Aorta (tissue), 5 donors: ENCODE measurements at regions of chr2 and their contacts with region 1.

Region 1: DNA sequence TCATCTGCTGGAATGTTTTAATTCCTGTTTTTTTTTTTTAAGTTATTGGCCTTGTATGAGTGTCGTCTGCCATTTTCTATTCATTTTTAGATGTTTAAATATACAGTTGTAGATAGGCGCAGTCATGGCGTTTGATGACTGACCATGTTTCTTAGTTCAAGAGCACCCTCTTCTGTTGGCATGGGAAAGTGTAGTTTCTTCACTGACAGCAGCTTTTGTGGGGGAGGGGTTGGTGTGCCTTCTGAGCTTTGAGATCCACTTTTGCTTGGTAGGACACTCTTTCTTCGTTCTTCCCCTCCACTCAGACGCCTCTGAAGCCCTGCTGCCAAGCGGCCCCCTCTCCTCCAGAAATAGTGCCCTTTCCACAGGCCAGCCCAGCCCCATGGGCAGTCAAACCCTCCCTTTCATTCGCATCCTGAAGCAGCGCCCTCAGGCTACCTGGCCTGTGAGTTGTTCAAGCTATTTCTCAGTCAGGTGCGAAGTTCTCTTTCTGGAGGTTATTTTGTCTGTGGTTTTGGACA is 492.0 kb downstream of the TNS1 start:
- DNase-seq: peak in 1 of 2 donors; percentile 57
- ATAC-seq: peak; percentile 89
- H3K4me3 ChIP-seq: no peak overlapping the region
- H3K27ac ChIP-seq: no peak overlapping the region
- H3K4me1 ChIP-seq: no peaks in the 10 kb centered on the region
- H3K27me3 ChIP-seq: no peaks in the 10 kb centered on the region

Region 2: DNA sequence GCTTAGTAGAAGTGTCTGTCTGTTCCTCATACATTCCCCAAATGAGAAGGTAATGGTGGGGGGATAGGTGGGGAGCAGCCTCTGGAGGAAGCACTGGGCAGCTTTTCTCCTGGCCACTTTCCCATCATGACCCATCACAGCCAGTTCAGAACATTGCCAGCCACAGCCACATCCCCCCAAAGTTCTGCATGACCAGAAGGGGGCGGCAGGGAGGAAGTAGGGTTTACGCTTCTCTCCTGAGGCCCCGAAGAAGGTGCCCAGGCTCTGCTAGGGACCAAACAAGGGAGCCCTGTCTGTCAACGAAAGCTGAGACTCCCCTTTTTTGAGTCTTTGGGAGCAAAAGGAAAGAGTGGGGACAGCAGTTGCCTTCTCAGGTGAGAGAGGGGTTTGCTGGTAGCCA is 823.2 kb before region 1 on chr2:
- intact Hi-C with region 1: loop called (anchors 5 kb)
- DNase-seq: peak in 1 of 2 donors; percentile 76
- ATAC-seq: no peak
- H3K4me3 ChIP-seq: no peak overlapping the region
- H3K27ac ChIP-seq: peak overlapping the region in 1 of 2 donors; percentile 29
- H3K4me1 ChIP-seq: peaks cover 0 to 4% of the 10 kb centered on the region in 2 donors
- H3K27me3 ChIP-seq: no peaks in the 10 kb centered on the region

Region 3: DNA sequence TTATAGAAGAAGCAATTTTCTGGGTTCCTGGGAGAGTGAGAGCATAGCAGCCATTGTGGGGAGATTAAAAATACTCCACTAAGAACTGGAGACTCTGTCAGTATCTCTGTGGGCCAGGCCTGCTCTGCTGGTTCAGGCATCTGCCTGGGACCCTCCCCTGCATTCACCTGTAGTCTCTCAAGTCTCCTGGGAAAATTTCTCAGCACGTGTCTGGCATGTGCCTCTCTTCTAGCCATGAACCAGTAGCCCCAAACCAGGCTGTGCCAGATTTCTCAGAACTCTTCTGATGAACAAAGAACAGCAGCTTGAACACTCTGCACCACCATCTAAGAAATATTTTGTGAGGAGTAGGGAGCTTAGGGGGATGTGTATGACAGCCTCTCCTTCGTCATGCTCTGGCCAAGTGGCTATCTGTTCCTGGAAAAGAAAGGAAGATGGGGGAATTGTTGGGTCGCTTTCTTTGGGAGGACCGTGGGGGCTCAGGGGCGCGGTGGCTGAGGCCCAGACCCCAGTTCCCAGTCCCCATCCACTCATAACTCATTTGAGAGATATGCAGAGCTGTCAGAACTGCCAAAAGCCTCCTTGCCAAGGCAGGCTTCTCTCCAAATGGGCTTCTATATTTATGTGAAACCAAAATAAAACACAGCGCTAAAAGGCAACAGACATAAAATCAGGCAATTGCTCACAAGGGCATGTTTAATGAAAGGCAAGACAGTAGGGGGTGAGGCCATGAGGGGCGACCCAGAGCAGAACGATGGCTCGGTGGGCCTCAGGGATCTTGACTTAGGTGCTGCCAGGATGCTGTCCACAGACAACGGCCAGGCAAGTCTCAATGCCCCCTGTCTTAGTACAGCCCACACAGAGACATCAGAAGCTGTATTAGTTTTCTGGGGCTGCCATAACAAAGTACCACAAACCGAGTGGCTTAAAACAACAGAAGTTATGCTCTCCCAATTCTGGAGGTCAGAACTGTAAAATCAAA is 536.2 kb before region 1 on chr2:
- intact Hi-C with region 1: loop called in 1 of 2 experiments (anchors 10 kb)
- DNase-seq: peak in 1 of 2 donors; percentile 69
- ATAC-seq: peak; percentile 82
- H3K4me3 ChIP-seq: no peak overlapping the region
- H3K27ac ChIP-seq: peak overlapping the region; percentile 57 to 88
- H3K4me1 ChIP-seq: peaks cover 12 to 31% of the 10 kb centered on the region in 2 donors
- H3K27me3 ChIP-seq: no peaks in the 10 kb centered on the region

Region 4: DNA sequence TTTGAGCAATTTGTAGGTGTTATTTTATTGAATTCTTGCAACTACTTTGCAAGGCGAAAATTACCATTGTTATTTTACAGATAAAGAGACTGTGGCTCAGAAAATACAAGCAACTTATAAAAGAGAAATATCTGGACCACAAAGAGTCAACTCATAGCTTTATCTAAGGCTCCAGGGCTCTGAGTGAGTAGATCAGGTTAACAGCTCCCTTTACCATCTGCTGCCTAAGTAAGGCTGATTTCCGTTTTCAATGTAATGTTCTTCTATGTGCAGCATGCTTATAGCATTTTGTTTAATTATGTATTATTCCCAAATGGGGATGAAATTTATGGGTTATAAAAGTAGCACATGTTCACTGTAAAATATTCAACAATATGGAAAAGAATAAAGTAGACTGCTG is 351.9 kb before region 1 on chr2:
- intact Hi-C with region 1: loop called in 1 of 2 experiments (anchors 5 kb)
- DNase-seq: no peak
- ATAC-seq: no peak
- H3K4me3 ChIP-seq: no peak overlapping the region
- H3K27ac ChIP-seq: no peak overlapping the region
- H3K4me1 ChIP-seq: peaks cover 0 to 3% of the 10 kb centered on the region in 2 donors
- H3K27me3 ChIP-seq: no peaks in the 10 kb centered on the region

Region 5: DNA sequence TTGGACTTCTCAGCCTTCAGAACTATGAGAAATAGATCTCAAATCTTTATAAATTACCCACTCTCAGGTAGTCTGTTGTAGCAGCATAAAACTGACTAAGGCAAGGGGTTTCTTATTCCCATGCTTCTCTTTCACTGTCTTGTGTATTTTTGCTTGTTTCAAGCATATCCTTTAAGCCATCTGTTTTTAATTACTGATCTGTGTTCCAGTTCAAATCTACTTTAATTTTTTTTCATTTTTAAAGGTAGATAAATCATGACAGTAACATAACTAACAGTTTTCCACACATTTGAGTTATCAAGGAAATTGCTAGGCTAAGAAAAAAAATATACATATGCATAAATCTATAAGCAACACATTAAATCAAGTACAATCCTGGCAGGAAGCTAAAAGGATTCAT is 333.1 kb before region 1 on chr2:
- intact Hi-C with region 1: loop called in 1 of 2 experiments (anchors 10 kb)
- DNase-seq: no peak
- ATAC-seq: no peak
- H3K4me3 ChIP-seq: no peak overlapping the region
- H3K27ac ChIP-seq: no peak overlapping the region
- H3K4me1 ChIP-seq: peaks cover 0 to 2% of the 10 kb centered on the region in 2 donors
- H3K27me3 ChIP-seq: peaks cover 0 to 1% of the 10 kb centered on the region in 2 donors

Region 6: DNA sequence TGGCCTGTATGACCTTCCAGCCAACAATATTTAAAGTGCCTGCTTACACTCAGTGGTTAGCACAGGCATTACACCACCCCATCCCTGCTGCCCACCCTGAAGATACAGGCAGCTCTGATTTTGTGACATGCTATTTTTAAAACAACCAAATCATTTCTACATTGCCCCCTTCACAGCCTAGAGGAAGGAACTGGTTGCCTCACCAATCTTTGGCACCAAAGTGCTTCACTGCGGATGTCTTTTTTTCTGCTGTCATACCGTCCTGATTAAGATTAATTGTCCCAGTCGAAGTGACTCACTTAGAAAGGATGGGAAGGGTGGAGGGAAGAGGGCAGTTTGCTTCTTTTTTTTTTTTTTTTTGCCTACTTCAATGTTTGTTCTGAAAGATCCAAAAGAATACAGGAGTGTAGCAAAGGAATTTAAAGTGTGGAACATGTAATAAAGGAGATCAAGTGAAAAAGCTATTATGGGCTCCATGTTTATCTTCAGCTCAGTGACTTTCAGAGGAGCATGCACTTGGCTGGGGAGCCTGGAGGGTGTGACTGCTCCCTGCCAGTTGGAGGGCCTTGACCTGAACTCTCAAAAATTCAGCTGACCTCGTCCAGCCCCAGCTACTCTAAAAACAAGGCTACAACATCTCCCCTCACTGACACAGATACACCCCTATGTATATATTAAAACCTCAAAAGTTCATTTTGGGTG is 149.9 kb before region 1 on chr2:
- intact Hi-C with region 1: loop called in 1 of 2 experiments (anchors 5 kb)
- DNase-seq: peak in 1 of 2 donors; percentile 64
- ATAC-seq: peak; percentile 79
- H3K4me3 ChIP-seq: no peak overlapping the region
- H3K27ac ChIP-seq: peak overlapping the region; percentile 92 to 94
- H3K4me1 ChIP-seq: peaks cover 15 to 21% of the 10 kb centered on the region in 2 donors
- H3K27me3 ChIP-seq: no peaks in the 10 kb centered on the region

Region 7: DNA sequence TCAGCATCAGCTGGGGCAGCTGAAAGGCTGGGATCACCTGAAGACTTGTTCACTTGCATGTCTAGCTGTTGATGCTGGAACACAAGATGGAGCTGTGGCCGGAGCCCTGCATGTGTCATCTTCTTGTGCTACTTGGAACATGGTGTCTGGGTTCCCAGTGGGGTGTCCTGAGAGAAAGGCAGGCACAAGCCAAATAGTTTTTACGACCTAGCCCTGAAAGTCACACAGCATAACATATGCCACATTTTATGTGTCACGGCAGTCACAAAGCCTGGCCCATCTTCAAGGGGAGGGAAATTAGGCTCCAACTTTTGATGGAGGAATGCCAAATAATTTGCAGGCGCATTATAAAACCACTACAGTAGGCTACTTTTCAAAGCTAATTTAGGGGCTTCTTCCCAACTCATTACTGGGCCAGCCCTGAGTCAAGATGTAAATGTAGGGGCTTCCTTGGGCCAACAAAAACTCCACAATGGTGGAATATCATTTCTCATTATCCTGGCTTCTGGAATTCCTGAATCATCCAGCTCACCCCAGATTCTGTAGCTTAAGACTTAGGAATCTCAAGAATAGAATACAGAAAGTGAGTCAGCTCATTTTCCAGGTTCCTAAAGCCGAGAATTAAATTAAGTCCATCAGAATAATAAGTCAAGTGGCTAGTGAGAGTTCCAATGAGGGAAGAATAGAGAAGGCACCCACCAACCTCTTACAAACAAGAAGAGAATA is 51.0 kb before region 1 on chr2:
- intact Hi-C with region 1: no loop called
- DNase-seq: no peak
- ATAC-seq: no peak
- H3K4me3 ChIP-seq: no peak overlapping the region
- H3K27ac ChIP-seq: no peak overlapping the region
- H3K4me1 ChIP-seq: peaks cover 0 to 4% of the 10 kb centered on the region in 2 donors
- H3K27me3 ChIP-seq: no peaks in the 10 kb centered on the region

Region 8: GRCh38 chr2:217713395-217714286 is 202.8 kb after region 1 on chr2:
- intact Hi-C with region 1: loop called (anchors 5 to 10 kb)
- DNase-seq: peak; percentile 85 to 93
- ATAC-seq: peak; percentile 93
- H3K4me3 ChIP-seq: no peak overlapping the region
- H3K27ac ChIP-seq: peak overlapping the region in 1 of 2 donors; percentile 29
- H3K4me1 ChIP-seq: peaks cover 0 to 2% of the 10 kb centered on the region in 2 donors
- H3K27me3 ChIP-seq: no peaks in the 10 kb centered on the region

Region 9: GRCh38 chr2:217774232-217774631 is 263.4 kb after region 1 on chr2:
- intact Hi-C with region 1: no loop called
- DNase-seq: no peak
- ATAC-seq: no peak
- H3K4me3 ChIP-seq: no peak overlapping the region
- H3K27ac ChIP-seq: no peak overlapping the region
- H3K4me1 ChIP-seq: peaks cover 0 to 5% of the 10 kb centered on the region in 2 donors
- H3K27me3 ChIP-seq: no peaks in the 10 kb centered on the region